Naive thymus-derived CD4-positive, alpha-beta T cell (primary cell): ENCODE measurements at regions of chr11 and their contacts with region 1.

Region 1: DNA sequence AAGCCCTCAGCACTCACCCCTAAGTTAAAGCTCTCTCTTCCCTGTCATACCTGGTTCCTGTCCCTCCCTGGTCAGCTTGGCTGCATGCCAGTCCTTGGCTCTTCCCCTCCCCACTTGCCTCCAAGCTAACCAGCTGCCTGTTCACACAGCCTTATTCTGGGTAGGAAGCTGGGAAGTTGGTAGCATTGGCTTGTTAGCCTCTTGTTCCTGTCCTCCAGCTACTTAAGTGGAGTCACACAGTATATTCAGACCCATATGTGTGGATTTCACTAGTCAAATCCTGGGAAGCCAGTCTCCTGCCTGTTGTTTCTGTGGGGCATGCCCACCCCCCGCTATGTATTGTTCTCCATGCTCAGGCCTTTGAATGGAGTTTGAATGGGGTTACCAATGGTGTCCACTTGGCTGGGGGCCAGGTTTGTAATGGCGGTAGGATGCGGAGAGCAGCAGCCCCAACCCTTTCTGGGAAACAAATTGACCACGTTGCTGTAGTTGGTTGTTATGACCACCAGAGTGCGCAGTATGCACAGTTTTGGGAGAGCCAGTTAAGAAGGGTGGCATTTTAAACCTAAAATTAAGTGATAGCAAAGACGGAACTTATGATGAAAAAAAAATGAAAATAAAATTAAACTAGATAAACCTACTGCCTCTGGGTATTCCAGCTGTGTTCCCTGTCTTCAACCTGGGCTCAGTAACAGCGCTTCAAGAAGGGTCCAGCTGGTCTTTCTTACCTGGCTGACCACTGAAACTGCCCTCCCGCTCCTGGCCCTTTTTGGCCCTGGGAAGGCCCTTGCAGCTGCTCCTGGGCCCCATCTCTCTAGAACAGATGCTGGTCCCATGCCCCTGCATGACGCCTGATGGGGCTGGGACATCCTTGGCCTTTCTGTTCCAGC is 10.7 kb upstream of the RPS3 start:
- DNase-seq: peak; percentile 23 to 74 (median 64)
- ATAC-seq: peak; percentile 92
- H3K4me3 ChIP-seq: no peak overlapping the region
- H3K4me3 Mint-ChIP-seq: no peak overlapping the region
- H3K27ac ChIP-seq: no peak overlapping the region
- H3K27ac Mint-ChIP-seq: no peak overlapping the region
- H3K4me1 ChIP-seq: peaks cover 5 to 10% of the 10 kb centered on the region in 2 donors
- H3K4me1 Mint-ChIP-seq: peaks cover 10 to 13% (median 12%) of the 10 kb centered on the region in 7 donors
- H3K27me3 ChIP-seq: no peaks in the 10 kb centered on the region
- H3K27me3 Mint-ChIP-seq: peaks cover 0 to 22% (median 0%) of the 10 kb centered on the region in 5 donors

Region 2: DNA sequence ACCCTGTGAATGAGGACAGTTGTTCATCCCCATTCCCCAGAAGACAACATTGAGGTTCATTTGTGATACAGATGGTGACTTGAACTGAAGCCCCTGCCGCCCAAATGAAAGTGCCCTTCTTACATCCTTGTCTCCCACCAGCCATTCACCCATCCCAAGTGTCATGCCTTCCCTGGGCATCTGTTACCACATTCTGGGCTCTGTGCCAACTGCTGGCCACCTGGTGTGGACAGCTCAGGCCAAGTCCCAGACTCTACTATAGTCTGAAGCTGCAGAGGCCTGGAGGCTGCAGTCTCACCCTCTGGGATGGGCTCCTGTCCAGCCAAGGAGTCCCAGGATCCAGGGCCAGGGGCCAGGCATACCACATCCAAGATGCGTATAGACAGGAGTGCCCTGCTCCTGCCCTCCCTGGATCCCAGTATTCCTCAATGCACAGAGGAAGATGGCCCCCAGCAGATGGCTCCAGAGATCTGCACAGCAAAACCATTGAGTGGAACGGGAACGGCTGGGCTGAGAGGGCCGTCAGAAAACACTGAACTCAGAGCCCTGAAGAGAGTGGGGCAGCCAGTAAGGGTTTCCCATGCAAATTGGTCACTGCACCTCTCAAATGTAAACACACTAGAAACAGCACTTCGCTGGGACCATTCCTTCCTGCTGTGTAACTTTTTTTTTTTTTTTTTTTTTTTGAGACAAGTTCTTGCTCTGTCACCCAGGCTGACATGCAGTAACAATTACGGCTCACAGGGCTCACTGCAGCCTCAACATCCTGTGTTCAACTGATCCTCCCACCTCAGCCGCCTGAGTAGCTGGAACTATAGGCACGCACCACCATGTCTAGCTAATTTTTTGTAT is 60.0 kb before region 1 on chr11:
- CTCF ChIA-PET with region 1: interaction called, 66 read pairs
- POLR2A ChIA-PET with region 1: interaction called, 3 read pairs
- intact Hi-C with region 1: loop called (anchors 1 kb)
- DNase-seq: peak in 8 of 9 donors; percentile 44 to 82 (median 66)
- ATAC-seq: peak; percentile 92
- H3K4me3 ChIP-seq: no peak overlapping the region
- H3K4me3 Mint-ChIP-seq: peak overlapping the region; percentile 9 to 75 (median 68)
- H3K27ac ChIP-seq: peak overlapping the region; percentile 58
- H3K27ac Mint-ChIP-seq: peak overlapping the region; percentile 79 to 96 (median 91)
- H3K4me1 ChIP-seq: peaks cover 16 to 54% of the 10 kb centered on the region in 2 donors
- H3K4me1 Mint-ChIP-seq: peaks cover 47 to 88% (median 80%) of the 10 kb centered on the region in 7 donors
- H3K27me3 ChIP-seq: no peaks in the 10 kb centered on the region
- H3K27me3 Mint-ChIP-seq: no peaks in the 10 kb centered on the region

Region 3: GRCh38 chr11:75351791-75352587 is 36.6 kb before region 1 on chr11:
- CTCF ChIA-PET with region 1: interaction called, 36 read pairs
- POLR2A ChIA-PET with region 1: interaction called, 16 read pairs
- intact Hi-C with region 1: loop called (anchors 1 to 2 kb)
- DNase-seq: peak; percentile 49 to 75 (median 70)
- ATAC-seq: peak; percentile 80
- H3K4me3 ChIP-seq: peak overlapping the region; percentile 87
- H3K4me3 Mint-ChIP-seq: peak overlapping the region; percentile 84 to 96 (median 94)
- H3K27ac ChIP-seq: peak overlapping the region; percentile 74
- H3K27ac Mint-ChIP-seq: peak overlapping the region; percentile 80 to 96 (median 92)
- H3K4me1 ChIP-seq: peaks cover 9 to 53% of the 10 kb centered on the region in 2 donors
- H3K4me1 Mint-ChIP-seq: peaks cover 64 to 82% (median 72%) of the 10 kb centered on the region in 7 donors
- H3K27me3 ChIP-seq: no peaks in the 10 kb centered on the region
- H3K27me3 Mint-ChIP-seq: peaks cover 0 to 3% (median 0%) of the 10 kb centered on the region in 5 donors

Region 4: GRCh38 chr11:75445315-75445953 is 56.8 kb after region 1 on chr11:
- CTCF ChIA-PET with region 1: interaction called, 21 read pairs
- POLR2A ChIA-PET with region 1: no interaction called
- intact Hi-C with region 1: loop called (anchors 1 kb)
- DNase-seq: peak; percentile 38 to 76 (median 66)
- ATAC-seq: peak; percentile 90
- H3K4me3 ChIP-seq: no peak overlapping the region
- H3K4me3 Mint-ChIP-seq: no peak overlapping the region
- H3K27ac ChIP-seq: no peak overlapping the region
- H3K27ac Mint-ChIP-seq: no peak overlapping the region
- H3K4me1 ChIP-seq: no peaks in the 10 kb centered on the region
- H3K4me1 Mint-ChIP-seq: peaks cover 0 to 3% (median 0%) of the 10 kb centered on the region in 7 donors
- H3K27me3 ChIP-seq: no peaks in the 10 kb centered on the region
- H3K27me3 Mint-ChIP-seq: no peaks in the 10 kb centered on the region

Region 5: GRCh38 chr11:75577207-75577606 is 188.6 kb after region 1 on chr11:
- CTCF ChIA-PET with region 1: no interaction called
- POLR2A ChIA-PET with region 1: no interaction called
- intact Hi-C with region 1: loop called in 1 of 2 experiments (anchors 1 kb)
- DNase-seq: peak in 8 of 9 donors; percentile 33 to 55 (median 44)
- ATAC-seq: peak; percentile 59
- H3K4me3 ChIP-seq: no peak overlapping the region
- H3K4me3 Mint-ChIP-seq: no peak overlapping the region
- H3K27ac ChIP-seq: no peak overlapping the region
- H3K27ac Mint-ChIP-seq: no peak overlapping the region
- H3K4me1 ChIP-seq: peaks cover 3% of the 10 kb centered on the region in 2 donors
- H3K4me1 Mint-ChIP-seq: peaks cover 2 to 14% (median 8%) of the 10 kb centered on the region in 7 donors
- H3K27me3 ChIP-seq: no peaks in the 10 kb centered on the region
- H3K27me3 Mint-ChIP-seq: peaks cover 0 to 17% (median 11%) of the 10 kb centered on the region in 5 donors